ENCODE measurements at regions of chr2 and their contacts with region 1.

Region 1: DNA sequence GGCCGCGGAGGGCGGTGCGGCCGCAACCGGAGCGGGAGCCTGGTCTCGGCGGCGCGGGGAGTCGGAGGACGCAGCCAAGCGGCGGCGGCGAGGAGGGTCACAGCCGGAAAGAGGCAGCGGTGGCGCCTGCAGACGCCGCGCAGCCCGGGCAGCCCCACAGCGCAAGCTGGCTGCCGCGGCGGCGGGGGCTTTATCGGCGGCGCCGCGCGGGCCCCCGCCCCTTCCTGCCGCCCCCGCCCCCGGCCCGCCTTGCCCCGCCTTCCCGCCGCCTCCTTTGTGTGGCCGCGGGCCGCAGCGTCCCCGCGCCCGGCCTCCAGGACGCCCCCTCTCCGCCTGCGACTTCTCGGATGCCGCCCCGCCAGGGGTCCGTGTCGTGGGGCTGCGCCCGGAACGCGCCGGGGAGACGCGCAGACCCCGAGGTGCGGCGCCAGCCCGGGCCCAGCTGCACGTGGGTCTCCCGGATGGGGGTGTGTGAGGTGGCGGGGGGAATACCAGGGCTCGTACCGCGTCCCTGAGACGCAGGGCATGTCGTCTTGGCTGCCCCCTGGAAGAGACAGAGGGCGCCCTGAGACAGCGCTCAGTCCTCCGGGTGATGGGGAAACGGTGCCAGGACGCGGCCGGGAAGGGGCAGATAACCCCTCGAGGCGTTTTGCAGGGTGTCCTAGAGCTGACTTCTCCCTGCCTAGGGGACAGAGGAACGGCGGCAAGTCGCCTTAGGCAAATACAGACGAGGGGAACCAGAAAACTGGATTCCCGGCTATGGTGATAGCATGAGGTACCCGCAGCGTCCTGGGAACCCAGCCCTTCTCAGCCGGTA is at the start of gene SERPINE2:
- DNase-seq: peak; percentile 82 to 91
- ATAC-seq: peak; percentile 88 to 89
- H3K4me3 ChIP-seq: peak within 1 kb of the TSS; percentile 76
- H3K27ac ChIP-seq: peak within 1 kb of the TSS; percentile 90 to 93
- H3K4me1 ChIP-seq: peaks cover 22% of the 10 kb centered on the region
- CTCF ChIP-seq: peak; percentile 76
- EP300 ChIP-seq: no peak
- POLR2A ChIP-seq: peak; percentile 95
- RAD21 ChIP-seq: peak; percentile 94 to 98
- polyA plus RNA-seq, gene SERPINE2: 58.6 and 94.6 TPM in 2 replicates

Region 2: GRCh38 chr2:224278531-224278930 is 239.2 kb after region 1 on chr2:
- CTCF ChIA-PET with region 1: interaction called, 91 read pairs
- POLR2A ChIA-PET with region 1: interaction called, 7 read pairs
- DNase-seq: no peak
- ATAC-seq: no peak; a peak in 2 of 6 replicates
- H3K4me3 ChIP-seq: no peak overlapping the region
- H3K27ac ChIP-seq: no peak overlapping the region
- H3K4me1 ChIP-seq: no peaks in the 10 kb centered on the region
- CTCF ChIP-seq: no peak
- EP300 ChIP-seq: no peak
- POLR2A ChIP-seq: no peak
- RAD21 ChIP-seq: no peak

Measured in A549 (cell line).